Breast epithelium (tissue), 4 donors: ENCODE measurements at regions of chr1 and their contacts with region 1.

Region 1: DNA sequence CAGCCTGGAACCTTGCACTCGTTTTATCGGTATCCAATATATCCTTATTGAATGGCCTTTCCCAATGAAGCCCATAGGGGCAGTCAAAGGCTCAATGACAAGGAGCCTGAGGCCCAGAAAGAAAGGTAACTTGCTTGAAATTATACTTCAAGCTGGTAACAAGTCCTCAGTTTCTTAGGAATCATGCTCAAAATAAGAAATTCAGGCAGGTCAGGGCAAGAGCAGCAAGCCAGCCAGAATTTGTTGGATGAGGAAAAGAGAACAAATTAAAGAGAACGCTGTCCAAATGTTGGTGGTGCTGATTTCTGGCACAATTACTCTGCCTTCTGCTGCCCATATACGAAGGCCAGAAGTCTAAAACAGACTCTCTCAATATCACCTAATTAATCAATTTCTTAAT is 77.6 kb downstream of the DDX20 start:
- DNase-seq: no peak
- H3K4me3 ChIP-seq: no peak overlapping the region
- H3K27ac ChIP-seq: no peak overlapping the region
- H3K4me1 ChIP-seq: no peaks in the 10 kb centered on the region
- H3K27me3 ChIP-seq: no peaks in the 10 kb centered on the region
- CTCF ChIP-seq: no peak
- POLR2A ChIP-seq: no peak

Region 2: GRCh38 chr1:112923956-112924349 is 1090.6 kb after region 1 on chr1:
- intact Hi-C with region 1: loop called (anchors 5 kb)
- DNase-seq: no peak
- H3K4me3 ChIP-seq: no peak overlapping the region
- H3K27ac ChIP-seq: no peak overlapping the region
- H3K4me1 ChIP-seq: no peaks in the 10 kb centered on the region
- H3K27me3 ChIP-seq: no peaks in the 10 kb centered on the region
- CTCF ChIP-seq: no peak
- POLR2A ChIP-seq: no peak